ENCODE measurements at regions of chr1 and their contacts with region 1.

Region 1: GRCh38 chr1:201077736-201078135 is 34.5 kb downstream of the CACNA1S start:
- DNase-seq: peak in 1 of 5 donors; percentile 42
- ATAC-seq: no peak
- H3K4me3 ChIP-seq: no peak overlapping the region
- H3K27ac ChIP-seq: no peak overlapping the region
- H3K4me1 ChIP-seq: no peaks in the 10 kb centered on the region
- H3K27me3 ChIP-seq: no peaks in the 10 kb centered on the region
- CTCF ChIP-seq: no peak
- POLR2A ChIP-seq: no peak

Region 2: DNA sequence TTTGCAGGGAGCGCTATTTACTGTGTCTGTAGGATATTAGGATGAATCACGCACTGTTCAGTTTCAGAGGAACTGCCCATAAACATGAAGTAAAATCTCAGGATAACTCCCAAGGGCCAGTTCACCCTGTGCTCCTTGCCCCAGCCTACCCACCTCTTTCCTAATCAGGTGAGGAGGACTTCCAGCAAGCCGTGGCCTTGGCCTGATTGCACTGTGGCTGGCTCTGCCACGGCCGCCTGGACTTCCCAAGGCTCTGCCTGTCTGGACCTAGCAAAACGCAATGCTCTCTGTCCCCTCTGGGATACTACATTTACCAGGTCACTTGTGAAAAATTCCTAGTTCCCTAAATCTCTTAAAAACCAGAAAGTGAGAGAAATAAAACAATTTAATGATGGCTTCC is 56.7 kb after region 1 on chr1:
- intact Hi-C with region 1: loop called in 1 of 10 experiments (anchors 2 kb)
- DNase-seq: no peak
- ATAC-seq: no peak
- H3K4me3 ChIP-seq: no peak overlapping the region
- H3K27ac ChIP-seq: no peak overlapping the region
- H3K4me1 ChIP-seq: peaks cover 0 to 21% (median 0%) of the 10 kb centered on the region in 12 donors
- H3K27me3 ChIP-seq: no peaks in the 10 kb centered on the region
- CTCF ChIP-seq: no peak
- POLR2A ChIP-seq: no peak

Region 3: GRCh38 chr1:201266774-201267173 is 189.0 kb after region 1 on chr1:
- intact Hi-C with region 1: no loop called
- DNase-seq: no peak
- ATAC-seq: no peak
- H3K4me3 ChIP-seq: no peak overlapping the region
- H3K27ac ChIP-seq: no peak overlapping the region
- H3K4me1 ChIP-seq: peaks cover 0 to 4% (median 0%) of the 10 kb centered on the region in 12 donors
- H3K27me3 ChIP-seq: peaks cover 0 to 10% (median 0%) of the 10 kb centered on the region in 9 donors
- CTCF ChIP-seq: no peak
- POLR2A ChIP-seq: no peak

Measured in heart left ventricle (tissue), 16 donors.